MCF 10A (cell line): ENCODE measurements at regions of chr7 and their contacts with region 1.

Region 1: GRCh38 chr7:158809596-158809995 is 19.7 kb downstream of the ESYT2 start:
- DNase-seq: no peak
- H3K4me3 Mint-ChIP-seq: no peak overlapping the region
- H3K27ac Mint-ChIP-seq: peak overlapping the region; percentile 22
- H3K4me1 Mint-ChIP-seq: peaks cover 39% of the 10 kb centered on the region
- H3K27me3 Mint-ChIP-seq: no peaks in the 10 kb centered on the region
- CTCF ChIP-seq: no peak

Region 2: DNA sequence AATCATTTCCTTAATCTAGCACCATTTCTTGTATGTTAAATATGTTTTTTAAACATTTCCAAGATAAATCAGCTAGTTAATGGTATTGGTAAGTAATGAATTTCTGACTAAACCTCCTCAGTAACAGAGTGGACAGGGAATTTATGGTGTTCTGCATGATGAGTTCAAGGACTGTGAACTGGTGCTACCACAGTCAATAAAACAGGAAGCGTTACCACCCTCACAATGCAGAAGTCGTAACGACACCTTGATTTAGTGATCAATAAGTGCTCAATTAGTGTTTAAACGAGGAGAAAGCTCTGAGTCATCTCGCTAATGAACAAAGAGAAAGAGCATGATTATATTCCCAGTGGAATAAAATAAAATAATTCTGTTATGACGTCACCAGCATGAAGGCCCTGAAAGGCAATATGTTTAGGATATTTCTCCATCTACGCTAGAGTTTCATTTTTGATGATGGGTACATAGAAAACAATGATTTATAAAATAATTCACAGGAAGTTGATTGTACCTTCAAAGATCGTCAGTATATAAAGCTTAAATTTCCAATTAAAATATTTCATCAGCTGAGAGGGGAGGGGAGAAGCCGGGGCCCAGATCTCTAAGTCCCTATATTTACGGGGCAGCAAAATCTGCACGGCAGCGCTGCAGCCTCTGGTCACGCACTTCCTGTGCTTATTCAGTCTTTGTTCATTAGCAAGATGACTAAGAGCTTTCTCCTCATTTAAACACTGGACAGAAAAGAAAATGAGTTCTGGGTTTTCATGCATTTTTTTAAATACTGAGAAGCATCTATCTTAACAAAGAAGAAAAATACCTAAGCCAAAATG is 622.5 kb before region 1 on chr7:
- CTCF ChIA-PET with region 1: no interaction called
- POLR2A ChIA-PET with region 1: no interaction called
- intact Hi-C with region 1: no loop called
- DNase-seq: no peak
- H3K4me3 Mint-ChIP-seq: no peak overlapping the region
- H3K27ac Mint-ChIP-seq: no peak overlapping the region
- H3K4me1 Mint-ChIP-seq: no peaks in the 10 kb centered on the region
- H3K27me3 Mint-ChIP-seq: no peaks in the 10 kb centered on the region
- CTCF ChIP-seq: no peak

Region 3: DNA sequence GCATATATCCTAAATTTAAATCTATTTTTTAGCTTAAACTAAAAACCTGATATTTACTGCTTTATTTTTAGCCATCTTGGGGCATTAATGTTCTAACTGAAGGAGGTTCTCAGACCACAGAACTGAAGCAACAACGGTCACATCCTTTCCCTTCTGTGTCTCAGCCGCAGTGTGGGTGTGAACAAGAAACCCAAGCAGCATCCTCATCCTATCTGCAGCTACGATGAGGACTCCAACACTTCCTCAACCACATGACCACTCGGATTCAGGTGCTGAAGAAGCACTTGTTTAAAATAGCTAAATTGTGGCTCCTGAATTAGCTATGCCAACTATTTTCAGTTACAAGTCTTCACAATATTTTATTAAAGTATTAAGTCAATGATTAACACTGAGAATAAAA is 14.4 kb after region 1 on chr7:
- CTCF ChIA-PET with region 1: interaction called, 4 read pairs
- POLR2A ChIA-PET with region 1: interaction called, 112 read pairs
- intact Hi-C with region 1: no loop called
- DNase-seq: no peak
- H3K4me3 Mint-ChIP-seq: no peak overlapping the region
- H3K27ac Mint-ChIP-seq: no peak overlapping the region
- H3K4me1 Mint-ChIP-seq: peaks cover 32% of the 10 kb centered on the region
- H3K27me3 Mint-ChIP-seq: no peaks in the 10 kb centered on the region
- CTCF ChIP-seq: no peak